Heart left ventricle (tissue), 16 donors: ENCODE measurements at regions of chr19 and their contacts with region 1.

Region 1: DNA sequence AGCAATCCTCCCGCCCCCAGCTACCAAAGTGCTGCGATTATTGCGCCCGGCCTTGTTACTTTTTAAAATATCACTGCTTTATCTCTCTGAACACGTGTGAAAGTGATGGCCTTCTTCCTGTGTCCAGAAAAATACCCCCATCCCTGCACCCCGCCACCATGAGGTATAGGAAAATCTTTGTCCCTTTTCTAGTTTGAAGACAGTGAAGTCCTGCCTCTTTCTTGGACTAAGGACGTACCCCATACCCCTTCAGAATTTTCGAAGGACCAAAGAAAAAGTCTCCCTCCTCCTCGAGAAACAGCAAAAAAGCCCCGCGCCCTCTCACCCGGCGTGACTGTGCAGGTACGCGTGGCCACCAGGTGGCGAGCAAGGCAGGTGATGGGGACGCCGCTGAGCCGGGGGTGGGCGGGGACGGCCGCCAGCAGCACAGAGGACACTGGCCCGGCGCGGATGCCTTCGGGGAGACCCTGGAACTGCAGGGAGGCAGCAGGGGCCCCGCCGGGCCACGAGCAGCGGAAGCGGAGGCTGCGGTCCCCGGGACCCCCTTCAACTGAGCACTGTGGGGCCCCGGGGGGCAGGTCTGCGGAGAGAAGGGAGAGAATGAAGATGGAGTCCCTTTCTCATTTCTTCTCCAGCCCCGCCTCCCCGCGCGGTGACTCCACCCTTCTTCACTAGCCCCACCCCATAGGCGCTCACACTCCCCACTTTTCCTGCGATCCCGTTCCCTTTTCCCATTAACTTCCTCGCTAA is 3.2 kb downstream of the VSIG10L start:
- DNase-seq: peak; percentile 74 to 89 (median 82)
- ATAC-seq: peak; percentile 52 to 76 (median 72)
- H3K4me3 ChIP-seq: peak overlapping the region; percentile 43 to 75 (median 62)
- H3K27ac ChIP-seq: peak overlapping the region in 10 of 12 donors; percentile 1 to 88 (median 40)
- H3K4me1 ChIP-seq: peaks cover 0 to 22% (median 12%) of the 10 kb centered on the region in 12 donors
- H3K27me3 ChIP-seq: no peaks in the 10 kb centered on the region
- CTCF ChIP-seq: peak; percentile 72 to 91 (median 80)
- POLR2A ChIP-seq: no peak

Region 2: DNA sequence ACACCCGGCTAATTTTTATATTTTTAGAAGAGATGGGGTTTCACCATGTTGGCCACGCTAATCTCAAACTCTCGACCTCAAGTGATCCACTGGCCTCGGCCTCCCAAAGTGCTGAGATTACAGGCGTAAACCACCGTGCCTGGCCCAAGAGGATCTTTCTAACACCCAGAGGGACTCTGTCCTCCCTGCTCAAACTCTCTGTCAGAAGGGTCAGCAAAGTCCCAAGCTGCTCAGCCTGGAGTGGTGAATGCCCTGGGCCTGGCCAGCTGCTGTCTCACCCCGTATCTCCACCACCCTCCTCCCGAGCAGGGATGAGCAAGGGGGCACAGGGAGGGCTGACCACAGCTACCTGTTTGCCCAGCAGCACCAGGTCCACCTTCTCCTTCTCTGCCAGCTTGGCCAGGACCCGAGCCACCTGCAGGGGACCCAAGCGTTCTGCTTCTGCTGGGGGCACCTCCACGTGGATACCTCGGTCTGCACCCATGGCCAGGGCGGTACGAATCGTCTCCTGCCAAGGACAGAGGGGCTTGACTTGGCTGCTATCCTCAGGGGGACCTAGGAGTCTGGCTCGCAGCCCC is 14.1 kb after region 1 on chr19:
- intact Hi-C with region 1: no loop called
- DNase-seq: peak in 1 of 5 donors; percentile 34
- ATAC-seq: no peak
- H3K4me3 ChIP-seq: no peak overlapping the region
- H3K27ac ChIP-seq: no peak overlapping the region
- H3K4me1 ChIP-seq: peaks cover 0 to 10% (median 0%) of the 10 kb centered on the region in 12 donors
- H3K27me3 ChIP-seq: no peaks in the 10 kb centered on the region
- CTCF ChIP-seq: no peak
- POLR2A ChIP-seq: no peak

Region 3: DNA sequence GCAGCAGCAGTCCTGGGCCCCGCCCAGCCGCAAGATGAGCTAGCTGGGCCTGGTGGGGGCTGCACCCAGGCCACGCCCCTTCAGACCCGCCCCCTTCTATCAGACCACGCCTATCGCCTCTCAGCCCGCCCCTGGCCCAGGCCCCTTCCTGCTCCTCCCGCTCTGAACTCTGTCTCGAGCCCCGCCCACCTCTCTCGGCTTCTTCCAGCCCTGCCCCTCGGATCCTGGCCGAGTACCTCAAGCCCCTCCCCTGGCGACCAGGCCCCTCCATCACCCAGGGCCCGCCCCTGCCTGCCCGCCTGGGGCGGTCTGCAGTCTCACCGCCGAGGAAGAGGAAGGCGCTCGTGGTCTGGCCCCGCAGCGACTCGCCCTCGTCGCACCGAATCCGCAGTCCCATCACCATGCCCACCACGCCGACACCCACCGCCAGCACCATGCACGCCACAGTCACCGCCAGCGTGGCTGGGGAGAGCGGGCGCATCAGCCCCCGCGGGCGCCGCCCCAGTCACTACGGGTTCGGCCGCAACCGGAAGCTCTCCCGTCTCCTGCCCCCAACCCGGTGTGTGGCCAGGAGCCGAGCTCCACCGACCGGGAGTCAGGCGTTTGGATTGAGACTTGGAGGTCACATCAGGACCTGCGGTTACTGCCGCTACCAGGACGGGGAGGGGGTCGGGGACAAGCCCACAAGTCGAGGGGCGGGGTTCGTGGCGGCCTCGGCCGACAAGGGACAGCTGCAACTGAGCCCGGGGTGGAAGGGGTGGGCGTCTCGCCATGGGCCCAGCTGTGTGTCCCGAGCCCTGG is 29.0 kb after region 1 on chr19:
- intact Hi-C with region 1: loop called in 7 of 10 experiments (anchors 1 to 2 kb)
- DNase-seq: peak; percentile 99 to 100 (median 100)
- ATAC-seq: peak; percentile 90 to 94 (median 94)
- H3K4me3 ChIP-seq: peak overlapping the region; percentile 61 to 94 (median 78)
- H3K27ac ChIP-seq: peak overlapping the region; percentile 61 to 98 (median 96)
- H3K4me1 ChIP-seq: peaks cover 2 to 43% (median 20%) of the 10 kb centered on the region in 12 donors
- H3K27me3 ChIP-seq: no peaks in the 10 kb centered on the region
- CTCF ChIP-seq: peak in 2 of 12 donors; percentile 8 to 9
- POLR2A ChIP-seq: peak in 1 of 2 donors; percentile 67

Region 4: GRCh38 chr19:51393959-51394836 is 55.5 kb after region 1 on chr19:
- intact Hi-C with region 1: loop called in 4 of 10 experiments (anchors 10 kb)
- DNase-seq: peak; percentile 92 to 95 (median 94)
- ATAC-seq: peak; percentile 95 to 99 (median 98)
- H3K4me3 ChIP-seq: peak overlapping the region in 11 of 12 donors; percentile 12 to 59 (median 44)
- H3K27ac ChIP-seq: peak overlapping the region; percentile 11 to 88 (median 66)
- H3K4me1 ChIP-seq: peaks cover 0 to 24% (median 5%) of the 10 kb centered on the region in 12 donors
- H3K27me3 ChIP-seq: no peaks in the 10 kb centered on the region
- CTCF ChIP-seq: peak in 4 of 12 donors; percentile 10 to 27 (median 16)
- POLR2A ChIP-seq: no peak

Region 5: GRCh38 chr19:51439021-51439465 is 100.3 kb after region 1 on chr19:
- intact Hi-C with region 1: loop called in 5 of 10 experiments (anchors 1 to 10 kb)
- DNase-seq: no peak
- ATAC-seq: peak in 1 of 4 donors; percentile 57
- H3K4me3 ChIP-seq: no peak overlapping the region
- H3K27ac ChIP-seq: no peak overlapping the region
- H3K4me1 ChIP-seq: peaks cover 0 to 21% (median 0%) of the 10 kb centered on the region in 12 donors
- H3K27me3 ChIP-seq: peaks cover 0 to 76% (median 16%) of the 10 kb centered on the region in 9 donors
- CTCF ChIP-seq: peak in 6 of 12 donors; percentile 6 to 34 (median 24)
- POLR2A ChIP-seq: no peak

Region 6: GRCh38 chr19:51514866-51515481 is 176.2 kb after region 1 on chr19:
- intact Hi-C with region 1: loop called in 2 of 10 experiments (anchors 2 kb)
- DNase-seq: no peak
- ATAC-seq: peak in 3 of 4 donors; percentile 39 to 54 (median 51)
- H3K4me3 ChIP-seq: no peak overlapping the region
- H3K27ac ChIP-seq: no peak overlapping the region
- H3K4me1 ChIP-seq: peaks cover 0 to 4% (median 0%) of the 10 kb centered on the region in 12 donors
- H3K27me3 ChIP-seq: peaks cover 0 to 36% (median 4%) of the 10 kb centered on the region in 9 donors
- CTCF ChIP-seq: peak; percentile 42 to 85 (median 74)
- POLR2A ChIP-seq: no peak

Region 7: GRCh38 chr19:51651216-51651846 is 312.6 kb after region 1 on chr19:
- intact Hi-C with region 1: loop called in 3 of 10 experiments (anchors 5 to 10 kb)
- DNase-seq: peak in 2 of 5 donors; percentile 31 to 32
- ATAC-seq: peak in 3 of 4 donors; percentile 28 to 78 (median 28)
- H3K4me3 ChIP-seq: no peak overlapping the region
- H3K27ac ChIP-seq: peak overlapping the region in 1 of 12 donors; percentile 12
- H3K4me1 ChIP-seq: peaks cover 0 to 23% (median 0%) of the 10 kb centered on the region in 12 donors
- H3K27me3 ChIP-seq: peaks cover 0 to 29% (median 0%) of the 10 kb centered on the region in 9 donors
- CTCF ChIP-seq: no peak
- POLR2A ChIP-seq: no peak